ENCODE measurements at regions of chr17 and their contacts with region 1.

Region 1: DNA sequence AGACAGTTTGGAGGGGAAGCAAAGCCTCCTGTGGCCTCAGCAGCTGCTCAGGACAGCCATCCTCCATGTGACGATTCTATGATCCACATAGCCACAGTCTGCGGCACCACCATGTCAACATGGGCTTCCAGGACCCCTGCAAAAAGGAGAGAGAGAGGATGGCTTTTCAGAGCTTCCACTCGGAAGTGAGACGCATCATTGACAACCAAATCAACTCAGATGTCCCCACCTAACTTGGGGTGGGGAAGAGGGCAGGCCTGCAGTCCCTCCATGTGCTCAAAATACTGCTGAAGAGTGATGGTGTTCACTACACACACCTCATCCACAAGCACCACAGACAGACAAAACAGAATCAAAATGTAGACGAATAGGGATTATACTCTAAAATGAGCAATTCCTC is 5.9 kb upstream of the METTL16 start:
- DNase-seq: no peak
- ATAC-seq: no peak
- H3K4me3 ChIP-seq: no peak overlapping the region
- H3K4me3 Mint-ChIP-seq: no peak overlapping the region
- H3K27ac ChIP-seq: no peak overlapping the region
- H3K27ac Mint-ChIP-seq: no peak overlapping the region
- H3K4me1 ChIP-seq: peaks cover 0 to 1% of the 10 kb centered on the region in 2 experiments
- H3K4me1 Mint-ChIP-seq: peaks cover 0 to 5% (median 3%) of the 10 kb centered on the region in 3 donors
- H3K27me3 ChIP-seq: no peaks in the 10 kb centered on the region
- H3K27me3 Mint-ChIP-seq: no peaks in the 10 kb centered on the region

Region 2: DNA sequence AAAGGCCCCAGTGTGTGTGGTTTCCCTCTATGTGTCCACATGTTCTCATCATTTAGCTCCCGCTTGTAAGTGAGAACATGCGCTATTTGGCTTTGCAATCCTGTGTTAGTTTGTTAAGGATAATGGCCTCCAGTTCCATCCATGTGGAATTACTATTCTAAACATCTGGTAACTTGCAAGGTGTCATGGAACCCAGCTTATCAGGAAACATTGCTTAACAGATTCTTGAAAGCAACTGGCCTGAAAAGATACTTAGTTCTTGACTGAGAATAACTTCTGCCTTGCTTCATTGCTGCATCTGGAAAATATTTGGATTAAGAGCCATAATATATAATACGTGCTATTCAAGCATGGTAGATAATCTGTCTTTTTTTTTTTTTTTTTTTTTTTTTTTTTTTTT is 103.7 kb after region 1 on chr17:
- CTCF ChIA-PET with region 1: no interaction called
- POLR2A ChIA-PET with region 1: interaction called in 1 of 2 experiments, 14 read pairs
- DNase-seq: no peak
- ATAC-seq: no peak
- H3K4me3 ChIP-seq: no peak overlapping the region
- H3K4me3 Mint-ChIP-seq: no peak overlapping the region
- H3K27ac ChIP-seq: no peak overlapping the region
- H3K27ac Mint-ChIP-seq: peak overlapping the region in 1 of 2 donors; percentile 1
- H3K4me1 ChIP-seq: peaks cover 1 to 48% of the 10 kb centered on the region in 2 experiments
- H3K4me1 Mint-ChIP-seq: peaks cover 62 to 79% (median 78%) of the 10 kb centered on the region in 3 donors
- H3K27me3 ChIP-seq: no peaks in the 10 kb centered on the region
- H3K27me3 Mint-ChIP-seq: no peaks in the 10 kb centered on the region